ENCODE measurements at regions of chr3 and their contacts with region 1.

Region 1: DNA sequence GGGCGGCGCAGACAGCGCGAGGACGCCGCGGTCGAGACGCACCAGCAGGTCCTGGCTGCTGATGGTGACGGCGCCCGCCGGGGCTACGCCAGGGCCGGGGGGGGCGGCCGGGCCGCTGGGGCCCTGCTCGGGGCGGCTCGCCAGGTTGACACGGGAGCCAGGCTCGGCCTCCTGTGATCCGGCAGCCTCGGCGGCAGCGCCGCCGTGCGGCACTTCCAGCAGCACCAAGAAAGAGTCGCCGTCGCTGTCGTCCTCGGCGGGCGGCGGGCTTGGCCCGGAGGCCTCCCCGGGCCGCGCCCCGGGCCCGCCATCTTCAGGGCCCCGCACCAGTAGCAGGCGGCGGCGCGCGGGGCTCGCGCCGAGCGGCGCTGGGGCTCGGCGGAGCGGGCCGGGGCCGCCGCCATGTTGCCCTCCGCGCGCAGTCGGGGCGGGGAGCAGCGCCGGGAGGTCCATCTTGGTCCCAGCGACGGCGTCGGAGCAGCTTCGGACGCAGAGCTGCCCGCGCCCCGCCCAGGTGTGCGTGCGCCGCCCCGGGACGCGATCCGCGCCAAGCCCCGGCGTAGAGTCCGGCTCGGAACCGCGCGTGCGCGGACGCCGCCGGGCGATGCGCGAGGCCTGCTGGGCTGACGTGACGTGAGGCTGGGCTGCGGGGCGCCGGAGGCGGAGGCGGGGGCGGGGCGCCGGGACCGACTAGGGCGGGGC is at the start of gene ZXDC:
- DNase-seq: peak; percentile 92
- ATAC-seq: peak; percentile 86
- H3K4me3 Mint-ChIP-seq: peak within 1 kb of the TSS; percentile 87
- H3K27ac Mint-ChIP-seq: peak within 1 kb of the TSS; percentile 63
- H3K4me1 Mint-ChIP-seq: peaks cover 37% of the 10 kb centered on the region
- H3K27me3 Mint-ChIP-seq: no peaks in the 10 kb centered on the region
- CTCF ChIP-seq: no peak
- total RNA-seq, gene ZXDC: 37.4 and 45.4 TPM in 2 replicates

Region 2: DNA sequence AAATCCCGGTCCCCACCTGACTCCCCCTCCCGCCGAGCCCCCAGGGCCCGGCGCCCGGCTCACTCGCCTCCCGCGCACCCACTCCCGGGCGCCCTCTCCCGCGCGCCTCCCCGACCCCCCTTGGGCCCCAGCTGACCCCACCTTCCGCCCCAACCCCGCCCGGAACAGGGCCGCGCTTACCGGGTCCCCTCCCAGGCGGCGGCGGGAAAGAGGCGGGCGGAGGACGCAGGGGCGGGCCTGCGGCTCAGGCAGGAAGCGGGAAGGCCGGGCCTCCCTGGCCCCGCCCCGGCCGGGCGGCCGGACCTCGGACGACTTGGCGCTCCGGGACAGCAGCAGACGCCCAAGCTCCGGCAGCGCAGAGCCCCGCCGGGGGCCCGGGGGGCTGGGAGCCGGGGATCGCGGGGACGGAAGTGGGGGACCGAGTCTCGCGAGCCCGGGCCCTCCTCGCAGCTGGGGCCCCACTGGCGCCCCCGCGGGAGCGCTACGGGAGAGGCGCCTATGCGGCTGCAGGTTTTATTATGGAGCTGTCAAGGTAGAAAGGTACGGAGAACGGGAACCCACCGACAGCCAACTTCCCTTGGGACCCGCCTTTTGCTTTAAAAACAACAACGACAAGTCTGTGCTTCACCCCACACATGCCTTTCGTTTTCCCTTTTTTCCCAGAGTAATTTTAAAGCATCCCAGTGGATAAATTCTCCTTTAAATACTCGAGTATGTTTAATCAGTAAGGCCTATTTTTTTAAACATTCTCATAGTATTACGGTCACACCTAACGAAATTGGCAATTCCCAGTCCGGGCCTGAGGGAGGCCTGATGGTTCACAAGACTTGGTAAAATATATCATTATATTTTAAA is 391.4 kb before region 1 on chr3 and contains the start of gene SLC41A3:
- CTCF ChIA-PET with region 1: no interaction called
- POLR2A ChIA-PET with region 1: interaction called, 4 read pairs
- intact Hi-C with region 1: loop called (anchors 1 kb)
- DNase-seq: peak; percentile 87
- ATAC-seq: peak; percentile 93
- H3K4me3 Mint-ChIP-seq: peak within 1 kb of the TSS; percentile 88
- H3K27ac Mint-ChIP-seq: peak within 1 kb of the TSS; percentile 85
- H3K4me1 Mint-ChIP-seq: peaks cover 16% of the 10 kb centered on the region
- H3K27me3 Mint-ChIP-seq: no peaks in the 10 kb centered on the region
- CTCF ChIP-seq: no peak
- total RNA-seq, gene SLC41A3: 34.8 and 36.2 TPM in 2 replicates

Region 3: GRCh38 chr3:126530171-126531050 is 54.8 kb after region 1 on chr3:
- CTCF ChIA-PET with region 1: no interaction called
- POLR2A ChIA-PET with region 1: no interaction called
- intact Hi-C with region 1: no loop called
- DNase-seq: no peak
- ATAC-seq: no peak
- H3K4me3 Mint-ChIP-seq: no peak overlapping the region
- H3K27ac Mint-ChIP-seq: no peak overlapping the region
- H3K4me1 Mint-ChIP-seq: no peaks in the 10 kb centered on the region
- H3K27me3 Mint-ChIP-seq: no peaks in the 10 kb centered on the region
- CTCF ChIP-seq: no peak

Region 4: DNA sequence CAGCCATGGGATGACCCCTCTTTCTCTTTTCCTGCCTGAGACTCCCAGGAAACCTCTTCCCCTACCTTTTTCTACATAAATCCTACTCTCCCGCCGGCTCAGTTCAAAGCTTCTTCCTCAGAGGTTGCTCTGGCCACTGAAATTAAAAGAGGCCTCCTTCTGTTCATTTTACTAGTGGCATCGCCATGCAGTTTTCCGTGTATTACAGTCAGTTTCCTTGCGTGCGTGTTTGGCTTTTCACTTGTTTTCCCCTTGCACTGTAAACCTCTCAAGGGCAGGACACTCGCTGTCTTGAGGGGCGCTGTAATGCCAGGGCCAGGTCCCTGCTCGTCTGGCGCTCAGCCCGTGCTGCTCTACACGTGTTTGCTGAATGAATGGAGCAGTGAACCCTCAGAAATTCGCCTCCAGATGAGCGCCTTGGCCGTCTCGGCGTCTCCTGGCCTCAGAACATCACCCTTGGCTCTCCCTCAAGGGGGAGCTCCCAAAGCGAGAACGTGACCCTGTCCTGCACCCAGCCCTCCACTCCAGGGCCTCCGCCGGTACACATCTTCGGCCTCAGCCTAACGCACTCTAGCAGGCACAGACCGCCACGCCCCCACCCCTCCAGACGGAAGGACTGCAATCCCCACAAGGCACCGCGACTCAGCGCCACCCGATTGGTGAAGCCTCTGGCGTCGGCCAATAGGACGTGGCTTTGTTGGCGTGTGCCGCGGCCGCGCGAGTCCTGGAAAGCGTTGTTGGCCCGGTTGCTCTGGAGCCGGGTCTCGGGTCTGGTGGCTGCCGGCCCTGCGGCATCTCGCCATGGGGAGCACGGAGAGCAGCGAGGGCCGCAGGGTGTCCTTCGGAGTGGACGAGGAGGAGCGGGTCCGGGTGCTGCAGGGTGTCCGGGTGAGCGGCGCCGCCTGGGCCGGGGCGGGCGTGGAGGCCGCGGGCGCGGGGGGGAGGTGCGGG is 228.2 kb after region 1 on chr3 and contains the start of gene CHCHD6:
- CTCF ChIA-PET with region 1: no interaction called
- POLR2A ChIA-PET with region 1: no interaction called
- intact Hi-C with region 1: loop called (anchors 1 kb)
- DNase-seq: peak; percentile 94
- ATAC-seq: peak; percentile 96
- H3K4me3 Mint-ChIP-seq: peak within 1 kb of the TSS; percentile 99
- H3K27ac Mint-ChIP-seq: peak within 1 kb of the TSS; percentile 74
- H3K4me1 Mint-ChIP-seq: peaks cover 17% of the 10 kb centered on the region
- H3K27me3 Mint-ChIP-seq: peaks cover 32% of the 10 kb centered on the region
- CTCF ChIP-seq: no peak
- total RNA-seq, gene CHCHD6: 7.5 and 10.0 TPM in 2 replicates

Region 5: DNA sequence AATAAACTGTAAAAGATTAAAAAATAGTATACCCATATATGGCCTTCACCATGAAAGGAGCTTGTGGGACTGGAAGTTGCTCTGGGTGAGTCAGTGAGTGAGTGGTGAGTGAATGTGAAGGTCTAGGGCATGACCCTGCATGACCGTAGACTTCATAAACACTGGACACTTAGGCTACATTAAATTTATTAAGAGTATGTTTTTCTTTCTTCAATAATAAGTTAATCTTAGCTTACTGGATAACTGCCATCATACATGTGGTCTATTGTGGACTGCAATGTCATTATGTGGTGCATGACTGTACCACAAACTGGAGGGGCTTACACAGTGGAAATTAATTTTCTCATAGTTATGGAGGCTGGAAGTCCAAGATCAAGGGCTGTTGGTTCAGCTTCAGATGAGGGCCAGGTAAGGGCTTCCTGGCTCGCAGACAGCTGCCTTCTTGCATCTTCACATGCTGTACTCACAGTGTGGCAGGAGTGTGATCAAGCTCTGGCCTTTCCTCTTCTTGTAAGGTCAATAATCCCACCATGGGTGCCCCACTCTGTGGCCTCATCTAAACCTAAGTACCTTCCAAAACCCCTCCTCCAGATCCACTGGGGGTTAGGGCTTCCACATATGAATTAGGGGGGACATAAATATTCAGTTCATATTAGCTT is 676.6 kb after region 1 on chr3:
- CTCF ChIA-PET with region 1: no interaction called
- POLR2A ChIA-PET with region 1: no interaction called
- intact Hi-C with region 1: no loop called
- DNase-seq: no peak
- ATAC-seq: no peak
- H3K4me3 Mint-ChIP-seq: no peak overlapping the region
- H3K27ac Mint-ChIP-seq: no peak overlapping the region
- H3K4me1 Mint-ChIP-seq: no peaks in the 10 kb centered on the region
- H3K27me3 Mint-ChIP-seq: peaks cover 8% of the 10 kb centered on the region
- CTCF ChIP-seq: no peak

Region 6: GRCh38 chr3:128123538-128124368 is 1648.2 kb after region 1 on chr3 and contains the start of gene RUVBL1:
- CTCF ChIA-PET with region 1: no interaction called
- POLR2A ChIA-PET with region 1: no interaction called
- intact Hi-C with region 1: loop called (anchors 5 kb)
- DNase-seq: peak; percentile 87
- ATAC-seq: peak; percentile 97
- H3K4me3 Mint-ChIP-seq: peak within 1 kb of the TSS; percentile 97
- H3K27ac Mint-ChIP-seq: peak within 1 kb of the TSS; percentile 93
- H3K4me1 Mint-ChIP-seq: peaks cover 23% of the 10 kb centered on the region
- H3K27me3 Mint-ChIP-seq: no peaks in the 10 kb centered on the region
- CTCF ChIP-seq: no peak
- total RNA-seq, gene RUVBL1: 44.8 and 46.6 TPM in 2 replicates